ENCODE measurements at regions of chr18 and their contacts with region 1.

Region 1: GRCh38 chr18:22563098-22563707 is 145.5 kb upstream of the CTAGE1 start:
- DNase-seq: no peak
- H3K4me3 ChIP-seq: no peak overlapping the region
- H3K27ac ChIP-seq: no peak overlapping the region
- H3K4me1 ChIP-seq: peaks cover 0 to 23% (median 9%) of the 10 kb centered on the region in 4 donors
- H3K27me3 ChIP-seq: no peaks in the 10 kb centered on the region
- CTCF ChIP-seq: peak in 3 of 4 experiments; percentile 65 to 76 (median 68)
- EP300 ChIP-seq: no peak
- POLR2A ChIP-seq: no peak

Region 2: GRCh38 chr18:21904856-21905255 is 658.3 kb before region 1 on chr18:
- intact Hi-C with region 1: loop called (anchors 5 kb)
- DNase-seq: no peak
- H3K4me3 ChIP-seq: no peak overlapping the region
- H3K27ac ChIP-seq: no peak overlapping the region
- H3K4me1 ChIP-seq: peaks cover 0 to 27% (median 21%) of the 10 kb centered on the region in 4 donors
- H3K27me3 ChIP-seq: no peaks in the 10 kb centered on the region
- CTCF ChIP-seq: no peak
- EP300 ChIP-seq: no peak
- POLR2A ChIP-seq: no peak

Region 3: GRCh38 chr18:22324191-22325131 is 238.7 kb before region 1 on chr18:
- intact Hi-C with region 1: loop called (anchors 10 kb)
- DNase-seq: no peak
- H3K4me3 ChIP-seq: peak overlapping the region in 3 of 4 donors; percentile 7 to 21 (median 20)
- H3K27ac ChIP-seq: no peak overlapping the region
- H3K4me1 ChIP-seq: peaks cover 0 to 11% (median 8%) of the 10 kb centered on the region in 4 donors
- H3K27me3 ChIP-seq: no peaks in the 10 kb centered on the region
- CTCF ChIP-seq: peak in 1 of 4 experiments; percentile 13
- EP300 ChIP-seq: no peak
- POLR2A ChIP-seq: no peak

Region 4: GRCh38 chr18:23126376-23127056 is 563.3 kb after region 1 on chr18:
- intact Hi-C with region 1: no loop called
- DNase-seq: no peak
- H3K4me3 ChIP-seq: no peak overlapping the region
- H3K27ac ChIP-seq: no peak overlapping the region
- H3K4me1 ChIP-seq: no peaks in the 10 kb centered on the region
- H3K27me3 ChIP-seq: peaks cover 0 to 3% (median 0%) of the 10 kb centered on the region in 3 donors
- CTCF ChIP-seq: no peak
- EP300 ChIP-seq: no peak
- POLR2A ChIP-seq: no peak